ENCODE measurements at regions of chr21 and their contacts with region 1.

Region 1: GRCh38 chr21:43728467-43729390 is 9.8 kb downstream of the PDXK start:
- DNase-seq: peak; percentile 94 to 95
- ATAC-seq: peak; percentile 88 to 93 (median 92)
- H3K4me3 ChIP-seq: peak overlapping the region; percentile 50 to 83 (median 63)
- H3K27ac ChIP-seq: peak overlapping the region; percentile 70 to 94 (median 90)
- H3K4me1 ChIP-seq: peaks cover 22 to 92% (median 56%) of the 10 kb centered on the region in 9 donors
- H3K27me3 ChIP-seq: no peaks in the 10 kb centered on the region
- CTCF ChIP-seq: peak in 8 of 9 donors; percentile 39 to 72 (median 54)

Region 2: DNA sequence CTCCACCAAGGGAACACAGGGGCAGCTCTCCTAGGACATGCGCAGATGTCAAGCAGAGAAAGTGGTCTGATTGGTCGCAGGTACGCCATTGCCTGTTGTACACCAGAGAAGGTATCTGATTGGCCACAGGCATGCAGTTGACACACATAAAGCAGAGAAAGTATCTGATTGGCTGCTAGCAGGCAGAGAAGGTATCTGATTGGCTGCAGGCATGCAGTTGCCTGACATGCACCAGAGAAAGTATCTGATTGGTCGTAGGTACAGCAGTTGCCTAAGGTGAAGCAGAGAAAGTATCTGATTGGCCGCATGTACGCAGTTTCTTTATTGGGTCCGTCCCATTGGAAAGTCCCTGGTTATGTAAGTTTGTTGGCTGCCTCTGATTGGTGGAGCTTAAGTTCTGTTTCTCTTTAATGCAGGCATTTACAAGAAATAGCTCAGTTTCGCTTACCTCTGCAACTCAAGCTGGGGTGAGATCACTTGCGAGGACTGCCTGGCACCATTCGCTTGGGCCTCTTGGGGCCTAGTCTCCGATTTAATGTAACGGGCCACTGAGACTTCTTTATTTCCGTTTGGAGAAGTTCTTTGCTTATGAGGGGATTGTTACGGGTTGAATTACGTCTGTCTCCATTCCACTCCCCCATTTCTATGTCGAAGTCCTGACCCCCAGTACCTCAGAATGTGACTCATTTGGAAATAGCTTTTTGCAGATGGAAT is 376.0 kb before region 1 on chr21:
- intact Hi-C with region 1: no loop called
- DNase-seq: no peak
- ATAC-seq: no peak
- H3K4me3 ChIP-seq: no peak overlapping the region
- H3K27ac ChIP-seq: peak overlapping the region in 1 of 10 donors; percentile 69
- H3K4me1 ChIP-seq: peaks cover 8 to 19% (median 15%) of the 10 kb centered on the region in 9 donors
- H3K27me3 ChIP-seq: no peaks in the 10 kb centered on the region
- CTCF ChIP-seq: no peak

Region 3: GRCh38 chr21:43667191-43667904 is 61.4 kb before region 1 on chr21:
- intact Hi-C with region 1: loop called in 3 of 10 experiments (anchors 10 kb)
- DNase-seq: no peak
- ATAC-seq: no peak
- H3K4me3 ChIP-seq: no peak overlapping the region
- H3K27ac ChIP-seq: no peak overlapping the region
- H3K4me1 ChIP-seq: peaks cover 0 to 15% (median 8%) of the 10 kb centered on the region in 9 donors
- H3K27me3 ChIP-seq: no peaks in the 10 kb centered on the region
- CTCF ChIP-seq: no peak

Region 4: GRCh38 chr21:43676391-43676790 is 52.3 kb before region 1 on chr21:
- intact Hi-C with region 1: loop called in 1 of 10 experiments (anchors 10 kb)
- DNase-seq: no peak
- ATAC-seq: no peak
- H3K4me3 ChIP-seq: no peak overlapping the region
- H3K27ac ChIP-seq: no peak overlapping the region
- H3K4me1 ChIP-seq: no peaks in the 10 kb centered on the region
- H3K27me3 ChIP-seq: no peaks in the 10 kb centered on the region
- CTCF ChIP-seq: no peak

Region 5: GRCh38 chr21:43762303-43763128 is 33.8 kb after region 1 on chr21:
- intact Hi-C with region 1: no loop called
- DNase-seq: no peak
- ATAC-seq: no peak
- H3K4me3 ChIP-seq: no peak overlapping the region
- H3K27ac ChIP-seq: no peak overlapping the region
- H3K4me1 ChIP-seq: peaks cover 0 to 20% (median 3%) of the 10 kb centered on the region in 9 donors
- H3K27me3 ChIP-seq: no peaks in the 10 kb centered on the region
- CTCF ChIP-seq: no peak

Region 6: DNA sequence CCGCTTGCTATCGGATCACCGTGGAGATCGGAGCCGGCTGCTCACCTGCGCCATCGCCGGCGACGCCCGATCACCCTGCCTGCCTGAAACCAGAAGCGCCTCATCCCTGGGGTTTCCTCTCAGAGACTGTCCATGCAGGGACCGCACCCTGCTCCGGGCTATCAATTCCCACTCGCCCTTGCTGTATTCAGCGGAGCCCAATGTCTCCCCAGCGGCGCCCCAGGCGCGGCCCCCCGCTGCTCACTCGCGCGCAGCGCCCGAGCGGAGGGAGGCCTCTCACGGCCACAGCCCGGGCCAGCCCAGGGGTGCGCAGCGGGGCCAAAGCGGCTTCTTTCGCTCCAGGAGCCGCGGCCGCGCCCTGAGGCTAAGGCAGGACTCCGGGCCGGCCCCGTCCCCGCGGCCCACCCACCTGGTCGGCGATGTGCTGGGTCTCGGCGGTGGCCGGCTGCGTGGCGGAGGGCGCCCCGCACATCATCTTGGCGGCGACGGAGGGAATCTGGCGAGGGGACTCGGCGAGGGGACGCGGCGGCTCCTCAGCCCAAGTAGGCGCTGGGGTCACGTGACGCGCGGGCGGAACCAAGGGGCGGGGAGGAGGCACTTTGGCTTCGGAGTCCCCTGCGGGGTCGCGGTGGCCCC is 47.2 kb after region 1 on chr21 and contains the start of gene CSTB:
- intact Hi-C with region 1: loop called in 5 of 10 experiments (anchors 2 to 10 kb)
- DNase-seq: peak; percentile 84 to 86
- ATAC-seq: peak; percentile 63 to 90 (median 84)
- H3K4me3 ChIP-seq: peak within 1 kb of the TSS; percentile 69 to 100 (median 94)
- H3K27ac ChIP-seq: peak within 1 kb of the TSS; percentile 77 to 98 (median 93)
- H3K4me1 ChIP-seq: peaks cover 0 to 50% (median 18%) of the 10 kb centered on the region in 9 donors
- H3K27me3 ChIP-seq: no peaks in the 10 kb centered on the region
- CTCF ChIP-seq: no peak
- total RNA-seq, gene CSTB: 33.0 to 50.2 (median 39.2) TPM

Region 7: DNA sequence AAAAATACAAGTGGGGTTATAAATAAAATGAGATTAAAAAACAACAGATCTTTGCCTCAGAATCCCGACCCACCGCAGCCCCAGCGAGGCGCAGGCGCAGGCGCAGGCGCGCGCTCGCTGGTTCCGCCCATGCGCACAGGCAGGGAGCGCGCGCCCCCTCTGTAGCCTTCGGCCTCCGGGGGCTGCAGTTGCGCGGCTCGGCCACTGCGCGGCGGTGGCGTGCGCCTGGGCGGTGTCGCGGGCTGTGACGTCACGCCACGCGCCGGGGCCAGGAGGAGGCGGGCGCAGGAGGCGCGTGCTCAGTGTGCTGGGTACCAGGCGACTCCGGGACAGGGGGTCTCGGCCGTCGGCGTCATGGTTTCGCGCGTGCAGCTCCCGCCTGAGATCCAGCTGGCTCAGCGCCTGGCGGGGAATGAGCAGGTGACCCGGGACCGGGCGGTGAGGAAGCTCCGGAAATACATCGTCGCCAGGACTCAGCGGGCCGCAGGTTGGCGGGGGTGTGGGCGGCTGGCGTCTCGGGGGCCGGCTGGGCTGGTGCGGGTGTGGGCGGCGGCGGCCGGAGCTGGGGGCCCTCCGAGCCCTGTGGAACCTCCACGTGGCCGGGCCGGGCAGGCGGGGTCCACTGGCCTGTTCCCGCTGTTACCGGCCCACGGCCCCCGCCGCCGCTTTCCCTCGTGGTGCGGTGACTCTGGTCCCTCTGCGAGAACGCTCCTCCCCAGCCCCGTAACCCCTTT is 60.7 kb after region 1 on chr21 and contains the start of gene RRP1:
- intact Hi-C with region 1: loop called in 2 of 10 experiments (anchors 10 kb)
- DNase-seq: peak; percentile 84 to 94
- ATAC-seq: peak; percentile 95 to 98 (median 95)
- H3K4me3 ChIP-seq: peak within 1 kb of the TSS; percentile 73 to 97 (median 92)
- H3K27ac ChIP-seq: peak within 1 kb of the TSS; percentile 53 to 95 (median 86)
- H3K4me1 ChIP-seq: peaks cover 6 to 22% (median 19%) of the 10 kb centered on the region in 9 donors
- H3K27me3 ChIP-seq: no peaks in the 10 kb centered on the region
- CTCF ChIP-seq: peak in 8 of 9 donors; percentile 97 to 100 (median 100)
- total RNA-seq, gene RRP1: 6.3 to 13.9 (median 9.3) TPM

Region 8: DNA sequence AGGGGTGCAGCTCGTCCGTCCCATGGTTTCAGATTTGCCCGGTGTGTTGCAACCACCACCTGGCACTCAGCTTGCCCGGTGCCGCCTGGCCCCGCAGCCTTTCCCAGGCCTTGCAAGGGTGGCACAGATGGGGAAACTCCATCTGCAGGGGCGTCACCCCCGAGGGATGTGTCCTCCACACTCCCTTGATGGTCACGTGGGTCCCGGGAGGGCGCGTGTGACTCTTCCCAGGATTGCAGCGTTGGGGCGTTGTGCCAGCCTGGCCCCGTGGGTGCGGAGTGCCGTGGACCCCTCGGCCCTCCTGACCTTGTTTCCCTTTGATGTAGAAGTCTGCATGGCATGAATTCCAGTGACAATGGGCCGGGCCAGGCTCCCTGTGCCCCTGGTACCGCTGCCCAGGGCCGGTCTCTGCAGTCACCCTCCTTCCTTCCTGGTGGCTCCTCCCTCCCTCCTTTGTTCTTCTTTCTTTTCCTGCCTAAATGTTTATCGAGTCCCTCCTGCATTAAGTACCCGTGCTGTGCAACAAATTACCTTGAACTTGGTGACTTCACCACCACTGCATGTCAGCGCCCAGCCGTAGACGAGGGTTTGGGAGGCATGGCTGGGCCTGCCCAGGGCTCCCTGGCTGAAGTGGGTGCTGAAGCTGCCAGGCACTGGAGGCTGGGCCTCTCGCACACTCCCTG is 83.6 kb after region 1 on chr21:
- intact Hi-C with region 1: no loop called
- DNase-seq: no peak
- ATAC-seq: peak in 2 of 8 donors; percentile 8 to 18
- H3K4me3 ChIP-seq: peak overlapping the region in 6 of 10 donors; percentile 15 to 47 (median 22)
- H3K27ac ChIP-seq: peak overlapping the region in 1 of 10 donors; percentile 55
- H3K4me1 ChIP-seq: peaks cover 3 to 25% (median 12%) of the 10 kb centered on the region in 9 donors
- H3K27me3 ChIP-seq: no peaks in the 10 kb centered on the region
- CTCF ChIP-seq: no peak

Region 9: GRCh38 chr21:43884012-43884860 is 155.5 kb after region 1 on chr21:
- intact Hi-C with region 1: no loop called
- DNase-seq: peak in 1 of 2 donors; percentile 33
- ATAC-seq: peak; percentile 50 to 77 (median 60)
- H3K4me3 ChIP-seq: no peak overlapping the region
- H3K27ac ChIP-seq: peak overlapping the region in 7 of 10 donors; percentile 44 to 69 (median 53)
- H3K4me1 ChIP-seq: peaks cover 21 to 66% (median 50%) of the 10 kb centered on the region in 9 donors
- H3K27me3 ChIP-seq: no peaks in the 10 kb centered on the region
- CTCF ChIP-seq: no peak